Activated CD8-positive, alpha-beta memory T cell treated with anti-CD3 and anti-CD28 coated beads, Interleukin-2, amount 10 ng/mL, durations not matched to agents 7 days and 5 days (primary cell): ENCODE measurements at regions of chr3 and their contacts with region 1.

Region 1: DNA sequence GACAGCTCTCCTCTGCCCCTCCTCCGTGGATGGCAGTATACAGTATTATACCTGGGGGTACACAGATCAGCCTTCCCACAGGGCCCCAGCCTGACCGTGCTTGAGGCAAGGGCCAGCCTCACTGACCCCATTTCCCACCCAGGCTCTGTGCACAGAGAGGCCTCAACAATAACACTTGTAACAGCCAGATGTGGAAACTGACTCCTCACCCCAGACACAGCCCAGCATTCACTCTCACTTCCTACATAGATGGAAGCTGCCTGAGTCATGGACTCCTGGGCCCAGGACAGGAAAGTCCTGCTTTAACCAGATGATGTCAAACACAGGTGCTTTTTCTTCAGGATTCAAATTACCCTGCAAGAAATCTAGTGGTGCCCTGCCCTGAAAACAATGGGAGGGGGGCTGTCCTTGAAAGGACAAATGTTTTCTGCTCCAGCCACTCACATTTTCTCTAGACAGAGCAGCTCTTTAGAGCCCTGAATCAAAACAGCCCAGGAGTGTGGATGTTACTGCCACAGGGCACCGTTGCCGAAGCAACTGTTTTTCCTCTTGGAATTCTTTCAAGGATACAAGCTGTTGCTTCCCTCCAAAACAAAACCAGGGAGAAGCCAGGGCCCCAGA is 16.4 kb downstream of the CCDC12 start:
- DNase-seq: no peak
- ATAC-seq: no peak
- H3K4me3 Mint-ChIP-seq: no peak overlapping the region
- H3K27ac Mint-ChIP-seq: peak overlapping the region; percentile 74
- H3K4me1 Mint-ChIP-seq: peaks cover 75% of the 10 kb centered on the region
- H3K27me3 Mint-ChIP-seq: no peaks in the 10 kb centered on the region

Region 2: DNA sequence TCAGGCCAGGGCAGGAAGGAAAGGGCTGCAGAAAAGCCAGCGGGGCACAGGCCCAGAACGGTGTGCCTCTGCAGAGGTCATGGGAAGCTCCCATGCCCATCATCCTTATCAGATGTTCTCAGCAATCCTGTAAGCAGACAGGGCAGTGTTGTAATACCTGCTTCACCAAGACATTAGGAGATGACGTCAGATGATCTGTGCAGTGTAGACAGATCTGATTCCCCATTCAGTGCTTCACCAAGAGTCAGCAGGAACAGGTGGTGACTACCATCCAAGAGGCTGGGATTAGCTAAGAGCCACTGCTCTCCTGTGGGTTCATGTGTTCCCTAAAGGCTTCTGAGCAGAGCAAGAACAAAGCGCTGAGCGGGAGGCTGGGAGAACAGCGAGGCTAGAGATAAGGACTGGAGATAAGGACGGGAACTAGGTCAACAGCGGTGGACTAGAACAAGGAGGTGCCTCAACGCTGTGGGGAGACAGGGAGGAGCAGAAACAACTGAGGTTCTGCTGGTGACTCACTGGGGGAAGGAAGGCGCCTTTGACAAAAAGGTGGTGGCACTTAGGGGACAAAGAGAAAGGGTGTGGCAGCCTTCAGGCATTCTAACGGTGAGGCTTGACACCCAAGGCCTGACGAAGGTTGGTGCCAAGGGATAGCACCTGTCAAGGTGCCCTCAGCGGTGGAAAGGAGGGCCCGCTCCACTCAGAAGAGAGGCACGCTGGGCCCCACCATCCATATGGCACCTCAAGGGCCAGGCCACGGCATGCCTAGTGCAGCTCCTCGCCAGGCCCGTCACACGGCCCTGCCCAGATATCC is 12.0 kb before region 1 on chr3:
- CTCF ChIA-PET with region 1: interaction called, 15 read pairs
- DNase-seq: peak; percentile 88
- ATAC-seq: peak; percentile 79
- H3K4me3 Mint-ChIP-seq: peak overlapping the region; percentile 66
- H3K27ac Mint-ChIP-seq: peak overlapping the region; percentile 97
- H3K4me1 Mint-ChIP-seq: peaks cover 76% of the 10 kb centered on the region
- H3K27me3 Mint-ChIP-seq: no peaks in the 10 kb centered on the region